MCF 10A (cell line): ENCODE measurements at regions of chr12 and their contacts with region 1.

Region 1: GRCh38 chr12:52235822-52236692 is 3.0 kb downstream of the KRT7 start:
- DNase-seq: peak; percentile 38
- H3K4me3 Mint-ChIP-seq: peak overlapping the region; percentile 91
- H3K27ac Mint-ChIP-seq: peak overlapping the region; percentile 91
- H3K4me1 Mint-ChIP-seq: peaks cover 68% of the 10 kb centered on the region
- H3K27me3 Mint-ChIP-seq: no peaks in the 10 kb centered on the region
- CTCF ChIP-seq: no peak

Region 2: DNA sequence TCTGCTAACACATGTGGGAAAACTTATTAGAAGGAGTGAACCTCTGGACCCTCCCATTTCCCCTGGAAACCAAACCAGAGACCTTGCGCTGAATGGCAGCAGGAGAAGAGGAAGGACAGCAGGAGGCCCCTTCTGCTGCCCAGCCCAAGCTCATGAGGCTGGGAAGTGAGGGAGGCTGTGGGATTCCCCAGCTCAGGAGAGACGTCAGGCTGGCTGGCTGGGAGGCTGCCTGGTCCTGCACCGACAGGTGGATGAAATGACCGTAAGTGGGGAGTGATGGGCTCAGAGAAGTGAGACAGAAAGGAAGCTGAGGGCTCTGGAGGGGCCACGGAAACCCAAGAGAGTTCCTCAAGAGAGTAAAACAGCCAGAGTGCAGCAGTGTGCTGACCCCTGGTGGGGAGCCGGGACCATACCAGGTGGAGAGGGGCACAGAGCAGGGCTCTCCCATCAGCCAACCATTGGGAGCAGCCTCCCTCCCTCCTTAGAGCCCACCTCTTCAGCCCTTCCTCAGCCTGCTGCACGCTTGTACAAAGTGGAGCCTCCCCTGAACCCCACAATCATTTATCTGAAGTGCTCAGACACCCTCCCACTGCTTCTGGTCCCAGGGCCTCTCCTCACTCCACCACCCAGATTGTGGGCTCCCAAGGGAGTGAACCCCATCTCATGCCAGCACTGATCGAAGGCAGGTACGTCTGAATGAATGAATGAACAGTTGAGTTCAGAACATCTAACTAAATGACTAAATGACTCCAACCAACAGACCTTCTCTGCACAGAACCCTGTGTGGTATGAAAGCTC is 215.3 kb before region 1 on chr12:
- CTCF ChIA-PET with region 1: no interaction called
- POLR2A ChIA-PET with region 1: no interaction called
- intact Hi-C with region 1: no loop called
- DNase-seq: peak; percentile 48
- H3K4me3 Mint-ChIP-seq: no peak overlapping the region
- H3K27ac Mint-ChIP-seq: no peak overlapping the region
- H3K4me1 Mint-ChIP-seq: peaks cover 6% of the 10 kb centered on the region
- H3K27me3 Mint-ChIP-seq: peaks cover 23% of the 10 kb centered on the region
- CTCF ChIP-seq: peak; percentile 51

Region 3: GRCh38 chr12:52221912-52222457 is 14.1 kb before region 1 on chr12:
- CTCF ChIA-PET with region 1: interaction called, 26 read pairs
- POLR2A ChIA-PET with region 1: interaction called, 11 read pairs
- intact Hi-C with region 1: no loop called
- DNase-seq: peak; percentile 93
- H3K4me3 Mint-ChIP-seq: no peak overlapping the region
- H3K27ac Mint-ChIP-seq: peak overlapping the region; percentile 37
- H3K4me1 Mint-ChIP-seq: peaks cover 40% of the 10 kb centered on the region
- H3K27me3 Mint-ChIP-seq: no peaks in the 10 kb centered on the region
- CTCF ChIP-seq: peak; percentile 45

Region 4: GRCh38 chr12:52262286-52262685 is 26.2 kb after region 1 on chr12:
- CTCF ChIA-PET with region 1: no interaction called
- POLR2A ChIA-PET with region 1: no interaction called
- intact Hi-C with region 1: no loop called
- DNase-seq: no peak
- H3K4me3 Mint-ChIP-seq: no peak overlapping the region
- H3K27ac Mint-ChIP-seq: no peak overlapping the region
- H3K4me1 Mint-ChIP-seq: peaks cover 20% of the 10 kb centered on the region
- H3K27me3 Mint-ChIP-seq: no peaks in the 10 kb centered on the region
- CTCF ChIP-seq: no peak